Pancreas (tissue), 10 donors: ENCODE measurements at regions of chr12 and their contacts with region 1.

Region 1: DNA sequence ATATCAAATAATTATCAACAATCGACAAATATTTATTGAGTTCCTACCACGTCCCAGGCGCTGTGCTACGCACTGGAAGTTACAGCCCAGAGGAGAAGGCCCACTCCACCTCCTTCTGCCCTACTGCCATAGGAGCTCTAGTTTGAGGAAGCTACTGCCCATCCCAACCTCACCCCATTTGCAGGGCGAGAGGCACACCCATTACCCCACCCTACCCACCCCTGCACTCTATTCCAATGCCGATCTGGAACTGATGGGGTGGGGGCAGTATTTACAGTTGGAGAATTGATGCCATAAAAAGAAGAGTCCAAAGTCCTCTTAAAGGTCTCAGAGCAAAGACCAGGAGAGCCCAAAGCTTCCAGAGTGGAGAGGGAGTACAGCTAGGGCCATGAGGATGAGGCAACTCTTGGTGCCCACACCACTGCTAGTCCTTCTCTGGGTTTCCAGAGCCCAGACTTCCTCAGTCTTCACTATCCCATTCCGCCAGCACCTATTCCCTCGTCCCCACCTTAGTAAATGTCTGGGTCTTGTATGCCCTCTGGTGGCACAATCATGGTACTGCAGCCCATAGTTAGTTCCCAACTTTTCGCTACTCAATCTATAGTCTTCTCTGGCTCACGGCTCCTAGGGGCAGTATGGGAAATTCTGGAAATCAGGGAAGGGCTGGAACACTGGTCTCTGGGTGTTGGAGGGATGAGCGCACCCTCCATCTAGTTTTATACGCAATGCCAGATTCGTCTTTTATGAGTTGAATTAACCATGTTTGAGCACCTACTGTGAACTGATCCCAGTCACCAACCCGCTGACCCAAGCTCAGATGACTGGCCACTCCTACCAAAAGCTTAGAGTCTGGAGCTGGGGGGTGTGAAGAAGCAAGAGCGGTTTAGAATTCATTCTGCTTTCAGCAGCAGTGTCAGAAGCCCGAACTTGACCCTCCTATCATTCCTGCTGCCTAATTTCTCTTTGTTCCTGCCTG is 6.9 kb upstream of the ADCY6 start:
- DNase-seq: peak; percentile 5 to 82 (median 67)
- ATAC-seq: peak; percentile 88 to 100 (median 97)
- H3K4me3 ChIP-seq: no peak overlapping the region
- H3K27ac ChIP-seq: no peak overlapping the region
- H3K4me1 ChIP-seq: peaks cover 0 to 4% (median 1%) of the 10 kb centered on the region in 3 donors
- H3K27me3 ChIP-seq: no peaks in the 10 kb centered on the region
- CTCF ChIP-seq: peak; percentile 87 to 96 (median 94)

Region 2: DNA sequence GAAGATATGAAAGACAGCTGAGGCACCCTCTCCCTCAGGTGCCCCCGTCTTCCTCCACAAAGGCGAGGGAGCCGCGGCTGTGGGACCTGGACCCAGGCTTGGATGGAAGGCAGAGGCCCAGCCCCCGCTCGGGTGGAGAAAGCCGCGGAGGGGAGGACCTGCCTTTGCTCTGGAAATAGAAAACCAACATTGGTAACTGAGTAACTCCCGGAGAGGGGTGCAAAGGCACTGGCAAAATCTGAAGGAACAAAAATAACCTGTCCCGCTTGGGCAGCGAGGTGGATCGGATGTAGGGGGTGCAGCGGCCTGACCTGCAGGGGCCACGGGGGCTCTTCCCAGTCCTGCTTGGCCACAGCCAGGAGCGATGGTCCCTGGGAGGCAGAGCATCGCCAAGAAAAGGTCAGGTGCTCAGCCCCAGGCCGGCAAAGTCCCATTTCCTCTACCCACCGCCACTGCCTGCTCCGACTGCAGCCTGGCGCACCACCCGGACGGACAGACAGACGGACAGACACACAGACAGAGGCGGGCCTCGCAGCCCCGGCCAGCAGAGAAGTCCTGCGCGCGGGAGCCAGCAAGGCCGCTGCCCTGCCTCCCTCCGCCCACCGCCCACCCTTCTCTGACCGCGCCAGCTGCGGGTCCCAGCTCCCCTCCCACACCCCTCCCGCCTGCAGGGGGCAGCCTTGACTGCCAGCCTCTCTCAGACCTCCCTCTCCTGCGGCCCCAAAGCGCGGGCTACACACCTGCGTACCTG is 853.7 kb before region 1 on chr12:
- intact Hi-C with region 1: no loop called
- DNase-seq: peak in 4 of 6 donors; percentile 45 to 79 (median 52)
- ATAC-seq: peak; percentile 70 to 82 (median 70)
- H3K4me3 ChIP-seq: no peak overlapping the region
- H3K27ac ChIP-seq: no peak overlapping the region
- H3K4me1 ChIP-seq: peaks cover 0 to 4% (median 0%) of the 10 kb centered on the region in 3 donors
- H3K27me3 ChIP-seq: peaks cover 0 to 4% (median 0%) of the 10 kb centered on the region in 4 donors
- CTCF ChIP-seq: no peak

Region 3: GRCh38 chr12:48716168-48716492 is 79.6 kb before region 1 on chr12:
- intact Hi-C with region 1: no loop called
- DNase-seq: no peak
- ATAC-seq: peak in 1 of 4 donors; percentile 17
- H3K4me3 ChIP-seq: peak overlapping the region; percentile 35 to 89 (median 62)
- H3K27ac ChIP-seq: peak overlapping the region; percentile 74 to 95 (median 80)
- H3K4me1 ChIP-seq: peaks cover 16 to 25% (median 20%) of the 10 kb centered on the region in 3 donors
- H3K27me3 ChIP-seq: no peaks in the 10 kb centered on the region
- CTCF ChIP-seq: no peak

Region 4: GRCh38 chr12:48750769-48751735 is 44.7 kb before region 1 on chr12:
- intact Hi-C with region 1: loop called in 2 of 3 experiments (anchors 5 kb)
- DNase-seq: no peak
- ATAC-seq: no peak
- H3K4me3 ChIP-seq: no peak overlapping the region
- H3K27ac ChIP-seq: no peak overlapping the region
- H3K4me1 ChIP-seq: no peaks in the 10 kb centered on the region
- H3K27me3 ChIP-seq: no peaks in the 10 kb centered on the region
- CTCF ChIP-seq: no peak

Region 5: GRCh38 chr12:48758221-48758620 is 37.5 kb before region 1 on chr12:
- intact Hi-C with region 1: loop called in 2 of 3 experiments (anchors 5 kb)
- DNase-seq: no peak
- ATAC-seq: no peak
- H3K4me3 ChIP-seq: no peak overlapping the region
- H3K27ac ChIP-seq: no peak overlapping the region
- H3K4me1 ChIP-seq: no peaks in the 10 kb centered on the region
- H3K27me3 ChIP-seq: no peaks in the 10 kb centered on the region
- CTCF ChIP-seq: no peak